ENCODE measurements at regions of chr2 and their contacts with region 1.

Region 1: GRCh38 chr2:28583899-28584553 is 88.2 kb downstream of the PLB1 start:
- DNase-seq: peak; percentile 80 to 89 (median 86)
- ATAC-seq: peak; percentile 95
- H3K4me3 ChIP-seq: peak overlapping the region; percentile 7; the same call in 1 of the 2 replicates
- H3K27ac ChIP-seq: peak overlapping the region; percentile 86; the same call in 2 of the 3 replicates
- H3K4me1 ChIP-seq: peaks cover 19 to 21% of the 10 kb centered on the region in 2 experiments
- H3K27me3 ChIP-seq: no peaks in the 10 kb centered on the region
- CTCF ChIP-seq: no peak
- EP300 ChIP-seq: peak; percentile 84
- POLR2A ChIP-seq: peak; percentile 49
- RAD21 ChIP-seq: no peak

Region 2: DNA sequence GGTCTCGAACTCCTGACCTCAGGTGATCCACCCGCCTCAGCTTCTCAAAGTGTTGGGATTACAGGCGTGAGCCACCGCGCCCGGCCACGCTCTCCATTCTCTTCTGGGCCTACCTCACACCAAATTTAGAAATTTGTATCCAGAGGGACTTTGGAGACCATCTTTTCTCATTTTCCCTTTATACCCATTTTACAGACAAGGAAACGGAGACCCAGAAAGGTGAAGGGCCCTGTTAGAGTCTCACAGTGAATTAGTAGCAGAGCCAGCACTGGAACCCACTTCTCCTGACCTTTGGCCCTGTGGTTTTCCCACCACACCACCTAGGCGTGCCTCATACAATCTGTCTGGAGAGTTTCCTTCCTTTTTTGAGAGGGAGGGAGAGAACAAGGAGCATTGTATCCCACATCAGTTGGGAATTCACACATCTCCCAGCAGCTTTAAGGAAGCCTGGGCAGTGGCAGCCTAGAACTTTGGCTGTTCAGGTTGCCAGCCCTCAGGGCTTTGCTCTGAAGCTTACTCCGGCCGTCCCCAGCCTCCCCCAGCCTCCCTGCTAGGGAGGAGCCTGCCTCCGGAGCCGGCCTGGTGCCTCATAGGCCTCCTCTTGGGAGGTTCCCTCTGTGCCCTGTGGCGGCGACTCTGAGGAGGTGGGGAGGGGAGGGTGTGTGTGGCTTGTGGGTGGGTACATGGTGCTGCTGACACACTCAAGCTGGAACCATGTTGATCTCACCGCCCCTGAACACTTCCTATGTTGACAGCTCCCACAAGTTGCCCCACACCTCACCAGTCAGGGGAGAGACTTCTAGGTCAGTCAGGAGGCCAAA is 177.5 kb before region 1 on chr2:
- CTCF ChIA-PET with region 1: no interaction called
- POLR2A ChIA-PET with region 1: no interaction called
- in situ Hi-C with region 1: no loop called
- intact Hi-C with region 1: no loop called
- DNase-seq: peak in 1 of 4 experiments; percentile 17
- ATAC-seq: peak; percentile 37
- H3K4me3 ChIP-seq: no peak overlapping the region
- H3K27ac ChIP-seq: no peak overlapping the region
- H3K4me1 ChIP-seq: peaks cover 0 to 4% of the 10 kb centered on the region in 2 experiments; a peak in 1 of 5 replicates
- H3K27me3 ChIP-seq: peaks cover 8 to 12% of the 10 kb centered on the region in 2 experiments
- CTCF ChIP-seq: no peak
- EP300 ChIP-seq: no peak
- POLR2A ChIP-seq: no peak
- RAD21 ChIP-seq: no peak

Region 3: DNA sequence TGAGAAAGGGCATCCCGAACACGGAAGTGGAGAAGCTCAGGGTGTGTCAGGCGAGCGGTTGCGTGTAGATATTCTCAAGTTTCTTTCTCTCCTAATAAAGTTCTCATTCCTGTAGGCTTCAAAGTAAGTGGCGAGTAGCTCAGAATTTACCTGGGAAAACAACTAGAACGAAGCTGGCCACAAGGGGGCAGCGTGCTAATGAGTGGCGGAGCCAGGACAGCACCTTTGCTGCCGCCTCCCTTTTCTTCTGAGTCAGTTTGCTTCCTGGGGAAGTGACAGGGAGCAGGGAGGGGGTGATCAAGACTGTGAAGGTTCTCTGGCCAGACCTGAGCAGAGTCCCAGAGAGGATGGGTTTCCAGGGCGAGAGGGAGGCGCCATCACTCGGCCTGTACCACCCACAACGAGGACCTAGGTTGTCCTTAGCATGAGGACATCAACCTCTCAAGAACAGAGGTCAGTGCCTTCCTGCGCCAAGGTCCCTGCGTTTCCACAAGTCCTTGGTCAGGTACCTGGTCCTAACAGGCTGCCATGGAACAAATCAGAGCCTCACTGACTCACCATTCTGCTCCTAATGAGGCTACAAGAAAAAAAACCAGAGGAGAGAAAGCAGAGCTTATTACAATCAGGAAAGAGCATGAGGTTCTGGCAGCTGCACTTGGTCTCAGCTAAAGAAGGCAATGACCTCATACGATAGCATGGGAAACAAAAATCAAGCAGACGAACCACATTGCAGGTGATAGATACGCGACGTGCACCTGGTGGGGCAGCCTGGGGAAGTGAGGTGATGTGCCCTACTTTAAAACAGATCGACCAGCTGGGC is 10.5 kb after region 1 on chr2:
- CTCF ChIA-PET with region 1: interaction called, 3 read pairs
- POLR2A ChIA-PET with region 1: interaction called, 14 read pairs
- in situ Hi-C with region 1: no loop called
- intact Hi-C with region 1: no loop called
- DNase-seq: peak; percentile 82 to 91 (median 84)
- ATAC-seq: peak; percentile 94
- H3K4me3 ChIP-seq: no peak overlapping the region
- H3K27ac ChIP-seq: no peak overlapping the region
- H3K4me1 ChIP-seq: peaks cover 5 to 8% of the 10 kb centered on the region in 2 experiments; a peak in 2 of 5 replicates
- H3K27me3 ChIP-seq: peaks cover 0 to 28% of the 10 kb centered on the region in 2 experiments; a peak in 3 of 5 replicates
- CTCF ChIP-seq: peak; percentile 90 to 95 (median 91)
- EP300 ChIP-seq: no peak
- POLR2A ChIP-seq: no peak
- RAD21 ChIP-seq: peak; percentile 77 to 91

Region 4: GRCh38 chr2:29196792-29197788 is 613.1 kb after region 1 on chr2:
- CTCF ChIA-PET with region 1: no interaction called
- POLR2A ChIA-PET with region 1: no interaction called
- in situ Hi-C with region 1: no loop called
- intact Hi-C with region 1: loop called (anchors 10 kb)
- DNase-seq: peak; percentile 76 to 79 (median 77)
- ATAC-seq: peak; percentile 98
- H3K4me3 ChIP-seq: no peak overlapping the region
- H3K27ac ChIP-seq: no peak overlapping the region
- H3K4me1 ChIP-seq: no peaks in the 10 kb centered on the region
- H3K27me3 ChIP-seq: peaks cover 9 to 17% of the 10 kb centered on the region in 2 experiments; a peak in 4 of 5 replicates
- CTCF ChIP-seq: peak; percentile 85 to 89 (median 88)
- EP300 ChIP-seq: no peak
- POLR2A ChIP-seq: no peak
- RAD21 ChIP-seq: peak; percentile 92 to 95

Measured in K562 (cell line).